Activated CD8-positive, alpha-beta T cell treated with anti-CD3 and anti-CD28 coated beads, Interleukin-2, amount 10 ng/mL, durations not matched to agents 7 days and 5 days (primary cell): ENCODE measurements at regions of chr17 and their contacts with region 1.

Region 1: DNA sequence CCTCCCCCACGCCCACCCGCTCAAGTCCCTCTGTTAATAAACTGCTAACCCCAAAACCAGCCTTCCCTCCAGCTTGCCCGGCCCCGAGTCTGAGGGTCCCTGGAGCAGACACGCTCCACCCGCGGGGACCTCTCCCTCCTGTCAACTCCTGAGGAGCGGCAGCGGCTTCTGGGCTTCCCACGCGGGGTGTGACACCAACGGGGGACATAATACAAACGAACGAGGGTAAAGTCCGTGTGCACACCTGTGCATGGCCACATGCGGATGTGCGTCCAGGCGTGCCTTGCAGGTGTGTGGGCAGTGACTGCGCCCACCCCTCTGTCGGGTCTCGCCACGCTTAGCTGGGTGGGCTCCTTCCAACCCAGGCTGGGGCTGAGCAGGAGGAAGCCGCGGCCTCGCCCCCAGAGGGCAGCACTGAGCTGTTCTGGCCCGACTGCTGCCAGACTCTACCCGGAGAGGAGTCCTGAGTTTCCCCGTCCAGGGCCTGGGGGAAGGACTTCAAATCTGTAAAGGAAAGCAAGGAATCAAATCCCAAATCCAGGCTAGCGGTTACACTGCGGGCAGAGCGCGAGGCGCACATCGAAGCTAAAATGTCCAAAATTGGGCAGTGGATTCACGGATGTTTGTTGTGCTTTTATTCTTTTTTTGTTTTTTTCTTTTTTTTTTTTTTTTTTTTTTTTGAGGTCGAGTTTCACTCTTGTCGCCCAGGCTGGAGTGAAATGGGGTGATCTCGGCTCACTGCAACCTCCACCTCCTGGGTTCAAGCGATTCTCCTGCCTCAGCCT is 24.2 kb upstream of the KRT17 start:
- DNase-seq: peak; percentile 87
- ATAC-seq: peak; percentile 89
- H3K4me3 Mint-ChIP-seq: peak overlapping the region; percentile 42
- H3K27ac Mint-ChIP-seq: peak overlapping the region; percentile 54
- H3K4me1 Mint-ChIP-seq: peaks cover 13% of the 10 kb centered on the region
- H3K27me3 Mint-ChIP-seq: no peaks in the 10 kb centered on the region

Region 2: GRCh38 chr17:41567317-41567716 is 81.3 kb before region 1 on chr17:
- CTCF ChIA-PET with region 1: interaction called, 11 read pairs
- POLR2A ChIA-PET with region 1: no interaction called
- DNase-seq: peak; percentile 28
- ATAC-seq: no peak
- H3K4me3 Mint-ChIP-seq: no peak overlapping the region
- H3K27ac Mint-ChIP-seq: peak overlapping the region; percentile 87
- H3K4me1 Mint-ChIP-seq: peaks cover 8% of the 10 kb centered on the region
- H3K27me3 Mint-ChIP-seq: peaks cover 26% of the 10 kb centered on the region

Region 3: DNA sequence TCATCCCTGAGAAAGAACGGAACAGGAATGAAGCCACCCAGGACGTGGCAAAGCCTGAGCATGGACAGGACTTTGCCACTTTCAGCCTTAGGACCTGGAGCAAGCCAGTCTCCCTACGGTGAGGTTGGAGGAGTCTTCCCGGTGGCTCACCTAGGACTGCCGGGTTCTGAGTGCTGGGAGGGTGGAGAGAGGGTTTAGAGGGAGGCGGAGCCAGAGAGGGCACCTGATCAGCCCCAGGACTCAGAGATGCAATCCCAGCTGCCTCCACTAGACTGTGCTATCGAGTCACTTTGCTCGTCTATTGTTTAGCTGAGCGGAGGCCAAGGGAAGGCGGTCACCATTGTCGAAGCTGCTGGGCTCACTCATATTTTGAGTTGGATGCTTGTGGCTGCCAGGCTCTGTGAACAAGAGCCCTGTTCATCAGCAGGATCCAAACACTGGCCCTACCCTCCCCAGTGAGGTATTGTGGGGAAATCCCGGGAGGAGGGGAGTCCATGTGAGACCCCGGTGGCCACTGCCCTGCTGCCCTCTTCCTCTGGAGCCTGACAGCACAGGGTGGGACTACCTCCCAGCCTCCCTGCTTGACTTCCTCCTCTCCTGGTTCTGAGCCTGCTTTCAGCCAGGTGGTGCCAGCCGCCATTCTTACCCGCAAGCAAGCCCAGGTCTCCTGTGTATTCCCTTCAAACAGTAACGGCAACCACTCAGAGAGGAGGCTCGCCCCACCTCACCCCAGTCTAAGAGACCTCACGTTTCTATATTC is 68.9 kb before region 1 on chr17:
- CTCF ChIA-PET with region 1: interaction called, 10 read pairs
- POLR2A ChIA-PET with region 1: no interaction called
- DNase-seq: peak; percentile 84
- ATAC-seq: peak; percentile 96
- H3K4me3 Mint-ChIP-seq: no peak overlapping the region
- H3K27ac Mint-ChIP-seq: no peak overlapping the region
- H3K4me1 Mint-ChIP-seq: no peaks in the 10 kb centered on the region
- H3K27me3 Mint-ChIP-seq: peaks cover 17% of the 10 kb centered on the region

Region 4: DNA sequence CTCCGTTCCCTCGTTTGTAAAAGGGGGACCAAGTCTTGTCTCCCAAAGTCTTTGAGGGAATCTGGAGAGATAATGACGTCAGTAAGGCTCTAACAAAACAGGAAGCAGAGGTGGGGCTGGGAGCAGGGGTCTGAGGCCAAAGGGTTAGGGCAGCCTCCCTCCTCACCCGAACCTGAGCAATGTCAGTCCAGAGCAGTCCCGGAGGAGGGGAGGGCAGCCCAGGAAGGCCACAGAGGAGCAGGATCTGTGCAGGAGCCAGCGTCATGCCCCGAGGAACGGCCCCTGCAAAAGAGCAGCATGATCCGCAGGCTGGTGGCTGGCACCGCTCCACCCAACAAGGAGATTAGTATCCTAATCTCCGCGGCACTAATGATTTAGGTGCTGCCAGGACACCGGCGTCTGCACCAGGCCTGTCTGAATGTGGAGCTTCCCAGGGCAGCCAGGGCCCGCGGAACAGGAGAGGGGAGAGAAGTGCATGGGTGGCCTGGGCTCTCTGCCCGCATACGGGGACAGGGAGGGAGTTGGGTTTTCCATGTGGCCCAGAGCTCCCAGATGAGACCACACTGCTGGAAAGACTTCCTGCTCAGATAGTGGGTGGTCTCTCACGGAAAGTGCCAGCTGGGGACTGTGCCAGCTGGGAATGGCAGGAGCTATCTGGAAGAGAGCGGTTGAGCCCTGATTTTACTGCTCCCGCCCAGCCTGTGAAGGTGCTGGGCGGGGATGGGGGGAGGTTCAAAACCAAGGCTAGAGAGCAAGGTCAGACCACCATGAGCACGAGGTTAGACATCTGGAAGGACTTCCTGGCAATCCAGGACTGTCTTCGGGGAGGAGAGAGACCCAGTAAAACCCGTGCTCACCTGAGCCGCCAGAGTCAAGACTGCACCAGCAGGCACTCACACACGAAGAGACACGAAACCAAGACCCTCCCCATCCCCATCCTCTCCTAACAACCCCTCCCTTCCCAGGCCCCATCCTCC is 13.2 kb before region 1 on chr17:
- CTCF ChIA-PET with region 1: interaction called, 11 read pairs
- POLR2A ChIA-PET with region 1: no interaction called
- DNase-seq: no peak
- ATAC-seq: no peak
- H3K4me3 Mint-ChIP-seq: no peak overlapping the region
- H3K27ac Mint-ChIP-seq: no peak overlapping the region
- H3K4me1 Mint-ChIP-seq: no peaks in the 10 kb centered on the region
- H3K27me3 Mint-ChIP-seq: no peaks in the 10 kb centered on the region

Region 5: DNA sequence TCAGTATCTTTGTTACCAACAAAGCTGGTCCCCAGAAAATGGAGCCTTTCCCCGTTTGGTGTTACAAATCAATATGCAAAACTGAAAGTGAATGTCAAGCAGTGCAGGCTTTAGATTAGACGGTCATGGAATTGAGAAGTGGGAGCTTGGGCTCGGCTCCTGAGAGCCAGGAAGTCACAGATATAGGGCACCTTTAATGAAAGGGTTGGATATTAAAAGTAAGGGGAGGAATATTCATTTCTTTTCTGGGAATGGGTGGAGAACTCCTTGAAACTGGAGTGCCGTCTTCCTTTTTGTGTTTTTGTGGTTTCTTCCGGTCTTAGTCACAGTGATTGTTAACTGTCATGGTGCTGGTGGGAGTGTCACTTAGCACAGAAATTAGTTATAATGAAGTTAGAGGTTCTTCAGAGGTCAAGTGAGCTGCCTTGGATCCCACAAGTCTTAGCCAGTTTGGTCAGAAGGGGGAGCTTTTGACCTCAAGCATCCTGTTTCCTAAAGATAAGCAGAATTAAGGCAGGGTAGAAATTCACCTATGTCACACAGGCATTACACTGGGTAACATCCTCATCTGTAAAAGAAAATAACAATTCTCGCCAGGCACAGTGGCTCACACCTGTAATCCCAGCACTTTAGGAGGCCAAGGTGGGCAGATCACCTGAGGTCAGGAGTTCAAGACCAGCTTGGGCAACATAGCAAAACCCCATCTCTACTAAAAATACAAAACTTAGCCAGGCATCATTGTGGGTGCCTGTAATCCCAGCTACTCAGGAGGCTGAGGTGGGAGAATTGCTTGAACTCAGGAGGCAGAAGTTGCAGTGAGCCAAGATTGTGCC is 30.5 kb after region 1 on chr17:
- CTCF ChIA-PET with region 1: interaction called, 21 read pairs
- POLR2A ChIA-PET with region 1: no interaction called
- DNase-seq: peak; percentile 91
- ATAC-seq: peak; percentile 91
- H3K4me3 Mint-ChIP-seq: peak overlapping the region; percentile 84
- H3K27ac Mint-ChIP-seq: peak overlapping the region; percentile 94
- H3K4me1 Mint-ChIP-seq: peaks cover 62% of the 10 kb centered on the region
- H3K27me3 Mint-ChIP-seq: no peaks in the 10 kb centered on the region

Region 6: GRCh38 chr17:41695954-41696756 is 47.6 kb after region 1 on chr17:
- CTCF ChIA-PET with region 1: interaction called, 11 read pairs
- POLR2A ChIA-PET with region 1: no interaction called
- DNase-seq: peak; percentile 90
- ATAC-seq: no peak
- H3K4me3 Mint-ChIP-seq: no peak overlapping the region
- H3K27ac Mint-ChIP-seq: peak overlapping the region; percentile 67
- H3K4me1 Mint-ChIP-seq: peaks cover 32% of the 10 kb centered on the region
- H3K27me3 Mint-ChIP-seq: no peaks in the 10 kb centered on the region

Region 7: DNA sequence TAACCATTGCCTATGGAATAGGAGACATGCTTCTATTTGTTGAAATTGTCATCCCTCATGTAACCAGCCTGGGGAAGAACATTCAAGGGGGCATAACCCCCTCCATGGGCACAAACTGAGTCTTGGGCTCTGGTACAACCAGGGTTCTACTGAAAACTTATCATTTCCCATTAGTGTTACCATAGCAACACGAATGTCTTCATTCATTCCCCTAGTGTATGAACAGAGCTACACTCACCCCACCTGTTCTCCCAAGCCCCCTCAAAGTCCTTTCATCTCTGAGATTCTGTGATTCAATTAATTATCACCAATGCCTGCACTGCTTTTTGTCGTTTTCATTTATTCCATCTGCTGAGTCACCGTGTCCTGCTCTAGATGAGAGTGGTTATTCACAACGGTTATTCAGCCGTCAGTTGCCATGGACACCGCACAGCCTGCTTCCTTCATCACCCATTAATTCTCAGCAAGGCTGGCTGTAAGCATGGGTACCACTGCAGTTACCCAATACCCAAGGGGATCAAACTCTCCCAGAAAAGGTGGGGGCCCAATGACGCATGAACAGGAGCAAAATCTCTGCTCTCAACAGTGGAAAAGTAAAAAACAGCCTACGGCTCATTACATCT is 62.0 kb after region 1 on chr17:
- CTCF ChIA-PET with region 1: no interaction called
- POLR2A ChIA-PET with region 1: no interaction called
- DNase-seq: no peak
- ATAC-seq: no peak
- H3K4me3 Mint-ChIP-seq: no peak overlapping the region
- H3K27ac Mint-ChIP-seq: no peak overlapping the region
- H3K4me1 Mint-ChIP-seq: peaks cover 4% of the 10 kb centered on the region
- H3K27me3 Mint-ChIP-seq: peaks cover 16% of the 10 kb centered on the region